GM18951 (cell line): ENCODE measurements at regions of chr11 and their contacts with region 1.

Region 1: DNA sequence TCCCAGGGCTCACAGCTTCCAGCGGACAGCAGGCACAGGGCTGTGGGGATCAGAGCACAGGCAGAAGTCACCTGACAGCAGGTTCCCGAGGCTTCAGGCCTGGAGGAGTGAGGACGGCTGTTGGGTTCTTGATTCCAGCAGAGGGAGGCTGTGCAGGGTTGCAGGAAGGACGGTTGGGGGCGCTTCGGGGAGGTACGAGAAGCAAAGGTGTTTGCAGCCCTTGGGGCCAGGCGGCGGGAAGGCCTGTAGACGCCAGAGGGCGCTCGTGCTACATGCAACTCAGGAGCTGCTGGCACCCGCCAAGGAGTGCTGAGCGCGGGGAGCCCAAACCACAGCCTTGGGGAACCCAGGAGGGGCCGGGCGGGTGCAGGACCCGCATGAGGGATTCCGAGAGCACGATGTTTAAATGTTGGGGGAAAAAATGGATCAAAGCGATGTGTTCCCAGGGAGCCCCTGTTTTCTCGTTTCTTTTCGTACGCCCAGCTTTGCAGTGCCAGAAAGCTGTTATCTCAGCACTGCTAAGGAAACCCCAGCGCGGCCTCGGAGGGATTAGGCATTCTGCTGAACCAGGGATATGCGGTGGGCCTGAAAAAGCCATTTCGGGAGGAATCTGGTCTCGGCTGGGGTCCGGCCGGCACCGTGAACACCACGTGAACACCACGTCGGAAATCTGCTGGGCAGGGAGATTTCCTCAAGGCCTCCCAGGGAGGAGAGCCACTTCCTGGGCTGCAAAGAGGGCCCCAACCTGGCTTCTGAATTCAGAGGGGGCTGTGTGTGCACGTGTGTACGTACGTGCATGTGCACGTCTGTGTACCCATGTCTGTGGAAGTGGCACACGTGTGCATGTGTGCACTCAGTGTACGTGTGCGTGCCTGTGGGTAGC is 88.1 kb downstream of the KCNQ1 start:
- POLR2A ChIP-seq: no peak

Region 2: GRCh38 chr11:1532014-1532586 is 1000.8 kb before region 1 on chr11:
- in situ Hi-C with region 1: no loop called
- POLR2A ChIP-seq: no peak

Region 3: GRCh38 chr11:2885676-2886081 is 352.7 kb after region 1 on chr11 and contains the start of gene CDKN1C:
- in situ Hi-C with region 1: loop called (anchors 5 kb)
- POLR2A ChIP-seq: peak; percentile 30